Activated CD4-positive, alpha-beta memory T cell treated with anti-CD3 and anti-CD28 coated beads for 36 hours (primary cell): ENCODE measurements at regions of chr1 and their contacts with region 1.

Region 1: GRCh38 chr1:207885129-207886032 is 25.5 kb downstream of the CD34 start:
- DNase-seq: peak; percentile 83
- H3K4me3 Mint-ChIP-seq: no peak overlapping the region
- H3K27ac Mint-ChIP-seq: peak overlapping the region; percentile 90
- H3K4me1 Mint-ChIP-seq: peaks cover 30% of the 10 kb centered on the region
- H3K27me3 Mint-ChIP-seq: peaks cover 3% of the 10 kb centered on the region

Region 2: GRCh38 chr1:207828485-207829158 is 56.8 kb before region 1 on chr1:
- CTCF ChIA-PET with region 1: interaction called, 136 read pairs
- POLR2A ChIA-PET with region 1: interaction called, 6 read pairs
- intact Hi-C with region 1: loop called (anchors 1 kb)
- DNase-seq: peak; percentile 79
- H3K4me3 Mint-ChIP-seq: no peak overlapping the region
- H3K27ac Mint-ChIP-seq: peak overlapping the region; percentile 11
- H3K4me1 Mint-ChIP-seq: peaks cover 97% of the 10 kb centered on the region
- H3K27me3 Mint-ChIP-seq: peaks cover 2% of the 10 kb centered on the region

Region 3: DNA sequence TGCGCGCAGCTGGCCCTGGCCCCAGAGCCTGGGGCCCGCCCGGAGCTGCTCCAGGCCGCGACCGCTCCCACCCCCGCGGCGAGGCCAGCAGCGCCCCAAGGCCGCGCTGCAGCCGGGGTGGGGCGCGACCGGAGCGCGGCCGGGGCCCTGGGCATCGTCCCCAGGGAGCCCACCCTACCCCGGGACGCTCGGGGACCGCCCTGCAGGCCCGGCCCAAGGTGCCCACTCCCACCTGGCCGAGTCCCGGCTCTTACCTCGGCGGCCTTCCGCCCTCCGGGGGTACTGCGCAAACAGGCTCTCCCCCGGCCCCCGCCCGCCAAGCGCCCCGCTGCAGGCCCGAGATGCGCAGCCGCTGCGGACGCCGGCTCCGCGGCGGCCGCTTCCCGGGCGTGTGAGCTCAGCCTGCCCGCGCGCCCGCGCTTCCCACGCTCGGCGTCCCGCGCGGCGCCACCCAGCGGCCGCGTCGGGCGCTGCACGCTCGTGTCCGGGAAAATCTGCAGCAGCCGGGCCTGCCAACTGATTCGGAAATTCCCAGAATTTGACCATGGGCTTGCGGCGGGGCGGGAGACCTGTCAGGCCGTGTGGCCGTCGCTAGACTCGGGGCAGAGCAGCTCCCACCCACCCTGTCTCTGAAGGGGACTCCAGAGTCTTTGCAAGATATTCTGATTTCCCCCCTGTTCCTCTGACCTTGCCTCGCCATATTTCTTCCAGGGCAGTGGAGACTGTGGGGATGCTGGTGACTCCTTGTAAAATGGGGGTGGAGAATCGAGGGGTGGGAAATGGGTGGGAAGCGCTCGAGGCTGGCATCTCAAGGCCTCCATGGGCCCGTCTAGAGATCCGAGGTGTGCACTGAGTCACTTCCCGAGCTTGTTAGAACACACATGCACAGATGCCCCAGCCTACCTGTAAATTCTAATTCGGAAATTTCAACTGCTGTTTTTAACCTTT is 16.3 kb before region 1 on chr1:
- CTCF ChIA-PET with region 1: interaction called, 220 read pairs
- POLR2A ChIA-PET with region 1: interaction called, 16 read pairs
- intact Hi-C with region 1: loop called (anchors 1 kb)
- DNase-seq: peak; percentile 81
- H3K4me3 Mint-ChIP-seq: peak overlapping the region; percentile 90
- H3K27ac Mint-ChIP-seq: peak overlapping the region; percentile 89
- H3K4me1 Mint-ChIP-seq: peaks cover 82% of the 10 kb centered on the region
- H3K27me3 Mint-ChIP-seq: no peaks in the 10 kb centered on the region

Region 4: DNA sequence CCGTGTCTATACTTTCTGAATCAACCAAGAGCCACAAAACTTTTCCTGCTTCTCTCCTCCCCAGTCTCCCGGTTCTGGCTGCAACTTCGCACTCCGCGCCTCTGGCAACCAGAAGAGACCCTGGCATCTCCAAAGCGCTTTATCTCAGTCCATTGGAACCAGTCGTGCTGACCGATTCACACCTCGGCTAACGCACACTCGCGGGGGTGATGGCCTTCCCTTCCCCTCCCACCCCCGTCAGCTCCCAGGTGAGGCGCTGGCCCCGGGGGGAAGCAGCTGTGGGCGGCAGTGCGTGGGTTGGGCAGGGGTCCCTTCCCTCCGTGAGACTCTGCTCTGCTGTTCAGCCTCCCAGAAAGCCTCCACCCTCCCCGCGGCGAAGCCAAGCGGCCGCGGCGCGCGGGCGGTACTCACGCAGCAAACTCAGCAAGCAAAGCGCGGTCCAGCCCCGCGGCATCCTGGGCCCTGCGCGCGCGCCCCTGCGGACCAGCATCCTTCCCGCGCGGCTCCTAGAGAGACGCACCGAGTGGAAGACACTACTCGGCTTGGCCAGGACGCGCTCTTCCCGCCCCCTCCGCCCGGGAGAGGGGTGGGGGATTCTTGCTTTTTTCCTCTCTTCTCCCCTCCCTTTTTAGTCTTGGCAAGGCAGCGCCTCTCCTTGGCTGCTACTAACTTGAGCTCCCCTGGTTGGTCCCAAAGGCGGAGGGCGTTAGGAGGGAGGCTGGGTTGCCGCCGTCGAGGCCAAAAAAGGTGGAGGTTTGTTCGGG is 25.4 kb after region 1 on chr1 and contains the start of gene CD34:
- CTCF ChIA-PET with region 1: interaction called, 11 read pairs
- POLR2A ChIA-PET with region 1: no interaction called
- intact Hi-C with region 1: no loop called
- DNase-seq: peak; percentile 46
- H3K4me3 Mint-ChIP-seq: peak within 1 kb of the TSS; percentile 40
- H3K27ac Mint-ChIP-seq: no peak within 1 kb of the TSS
- H3K4me1 Mint-ChIP-seq: peaks cover 13% of the 10 kb centered on the region
- H3K27me3 Mint-ChIP-seq: peaks cover 40% of the 10 kb centered on the region
- total RNA-seq, gene CD34: not detected

Region 5: GRCh38 chr1:207963427-207964194 is 78.2 kb after region 1 on chr1:
- CTCF ChIA-PET with region 1: interaction called, 255 read pairs
- POLR2A ChIA-PET with region 1: interaction called, 3 read pairs
- intact Hi-C with region 1: loop called (anchors 1 kb)
- DNase-seq: peak; percentile 89
- H3K4me3 Mint-ChIP-seq: peak overlapping the region; percentile 81
- H3K27ac Mint-ChIP-seq: no peak overlapping the region
- H3K4me1 Mint-ChIP-seq: peaks cover 9% of the 10 kb centered on the region
- H3K27me3 Mint-ChIP-seq: peaks cover 24% of the 10 kb centered on the region

Region 6: GRCh38 chr1:208245185-208245705 is 359.9 kb after region 1 on chr1:
- CTCF ChIA-PET with region 1: interaction called, 5 read pairs
- POLR2A ChIA-PET with region 1: no interaction called
- intact Hi-C with region 1: loop called (anchors 10 kb)
- DNase-seq: peak; percentile 84
- H3K4me3 Mint-ChIP-seq: peak overlapping the region; percentile 65
- H3K27ac Mint-ChIP-seq: no peak overlapping the region
- H3K4me1 Mint-ChIP-seq: peaks cover 10% of the 10 kb centered on the region
- H3K27me3 Mint-ChIP-seq: peaks cover 21% of the 10 kb centered on the region